Naive thymus-derived CD8-positive, alpha-beta T cell (primary cell): ENCODE measurements at regions of chr3 and their contacts with region 1.

Region 1: GRCh38 chr3:71495708-71496472 is 87.6 kb downstream of the FOXP1 start:
- DNase-seq: peak in 2 of 10 donors; percentile 23 to 41
- ATAC-seq: peak in 1 of 2 donors; percentile 19
- H3K4me3 Mint-ChIP-seq: peak overlapping the region; percentile 58 to 87 (median 82)
- H3K27ac Mint-ChIP-seq: peak overlapping the region; percentile 96 to 100 (median 98)
- H3K4me1 Mint-ChIP-seq: peaks cover 46 to 94% (median 88%) of the 10 kb centered on the region in 4 donors
- H3K27me3 Mint-ChIP-seq: no peaks in the 10 kb centered on the region

Region 2: DNA sequence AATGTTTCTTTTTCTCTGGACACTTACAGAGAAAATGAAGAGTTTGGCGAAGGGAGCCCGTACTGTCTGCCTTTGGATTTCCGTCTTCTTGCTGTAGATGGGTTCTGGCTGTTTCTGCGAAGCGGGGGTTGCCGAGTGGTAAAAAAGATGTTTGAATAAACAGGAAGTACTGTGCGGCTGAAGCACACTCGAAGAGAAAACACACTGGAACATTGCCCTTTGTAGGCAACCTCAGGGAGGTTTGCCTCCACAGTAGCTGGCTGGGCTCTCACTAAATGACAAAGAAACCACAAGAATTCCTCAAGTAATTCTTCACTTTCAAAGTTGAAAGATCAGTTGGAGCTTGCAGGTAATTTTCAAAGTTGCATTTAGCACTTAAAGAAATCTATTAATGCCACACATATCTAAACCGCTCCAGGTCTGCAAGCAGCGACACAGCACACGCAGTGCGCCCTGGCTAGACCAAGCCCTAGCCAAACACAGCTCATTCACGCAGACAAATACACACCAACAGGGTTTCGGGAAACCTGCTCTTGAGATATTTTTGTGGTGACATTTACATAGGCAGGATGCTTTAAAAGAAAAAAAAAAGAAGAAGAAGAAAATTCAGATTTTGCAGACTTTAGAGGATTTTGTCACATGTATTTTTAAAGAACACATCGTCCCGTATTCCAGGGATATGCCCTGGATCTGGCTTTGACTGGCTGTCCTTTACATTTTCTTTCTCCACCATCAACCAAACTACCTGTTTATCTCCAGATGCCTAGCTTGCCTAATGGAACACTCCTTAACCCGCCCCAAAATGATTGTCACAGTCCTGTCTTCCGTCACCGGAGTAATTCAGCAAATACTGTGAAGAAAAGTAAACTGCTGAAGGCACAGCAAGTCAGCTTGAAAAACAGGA is 365.2 kb before region 1 on chr3:
- POLR2A ChIA-PET with region 1: interaction called, 12 read pairs
- DNase-seq: peak; percentile 46 to 90 (median 76)
- ATAC-seq: peak; percentile 77 to 83
- H3K4me3 Mint-ChIP-seq: peak overlapping the region; percentile 86 to 99 (median 93)
- H3K27ac Mint-ChIP-seq: peak overlapping the region; percentile 92 to 98 (median 96)
- H3K4me1 Mint-ChIP-seq: peaks cover 44 to 89% (median 84%) of the 10 kb centered on the region in 4 donors
- H3K27me3 Mint-ChIP-seq: no peaks in the 10 kb centered on the region

Region 3: DNA sequence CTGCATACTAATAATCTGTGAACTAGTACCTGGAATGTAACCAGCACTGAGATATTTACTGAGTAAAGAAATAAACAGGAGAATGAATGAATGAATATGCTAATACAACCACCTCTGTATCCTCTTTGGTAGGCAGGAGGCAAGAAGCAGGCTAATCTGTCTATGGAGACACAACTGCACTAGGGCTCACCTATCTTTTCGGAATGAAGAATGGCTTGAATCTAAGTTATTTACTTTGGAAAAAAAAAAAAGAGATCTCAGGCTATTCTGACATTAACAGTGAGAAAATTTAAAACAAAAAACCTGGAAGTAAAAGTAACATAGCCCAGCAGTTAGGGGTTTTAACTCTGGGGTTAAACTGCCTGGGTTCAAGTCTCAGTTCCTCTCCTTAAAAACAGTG is 86.5 kb before region 1 on chr3:
- POLR2A ChIA-PET with region 1: no interaction called
- DNase-seq: no peak
- ATAC-seq: no peak
- H3K4me3 Mint-ChIP-seq: peak overlapping the region in 3 of 10 donors; percentile 30 to 59 (median 39)
- H3K27ac Mint-ChIP-seq: peak overlapping the region; percentile 47 to 96 (median 81)
- H3K4me1 Mint-ChIP-seq: peaks cover 40 to 92% (median 87%) of the 10 kb centered on the region in 4 donors
- H3K27me3 Mint-ChIP-seq: no peaks in the 10 kb centered on the region

Region 4: DNA sequence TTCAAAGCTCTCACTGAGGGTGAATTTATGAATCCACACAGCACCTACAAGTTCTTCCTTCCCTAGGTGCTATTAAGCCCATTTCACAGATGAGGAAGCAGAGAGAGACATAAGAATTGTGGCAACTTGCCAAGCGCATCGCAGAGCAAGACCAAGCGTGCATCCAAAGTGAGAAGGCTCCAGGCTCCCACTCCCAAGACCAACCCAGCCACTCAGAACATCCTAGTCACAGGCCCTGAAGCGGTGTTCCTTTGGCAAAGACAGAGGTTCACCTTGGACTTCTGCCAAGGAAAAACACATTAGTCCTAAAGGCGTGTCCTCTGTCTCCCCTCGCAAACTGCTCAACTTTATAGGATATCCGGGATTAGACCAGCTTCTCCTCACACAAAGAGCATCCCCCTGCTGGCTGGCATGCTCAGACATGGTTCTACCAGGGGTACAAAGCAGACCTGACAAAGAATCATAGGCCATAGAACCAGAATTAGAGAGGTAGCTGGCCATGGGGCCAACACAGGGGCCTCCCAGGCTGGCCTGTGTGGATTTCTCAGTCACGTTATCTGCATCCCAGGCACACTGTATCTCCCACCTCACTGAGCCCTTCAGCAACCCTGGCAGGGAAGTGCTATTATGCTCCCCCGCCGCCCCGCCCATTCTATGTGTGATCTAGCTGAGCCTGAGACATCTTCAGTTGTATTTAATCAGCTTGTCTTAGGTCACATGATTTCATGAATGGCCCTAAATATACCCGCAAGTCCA is 72.6 kb before region 1 on chr3:
- POLR2A ChIA-PET with region 1: interaction called, 15 read pairs
- DNase-seq: no peak
- ATAC-seq: no peak
- H3K4me3 Mint-ChIP-seq: peak overlapping the region; percentile 62 to 81 (median 74)
- H3K27ac Mint-ChIP-seq: peak overlapping the region; percentile 93 to 99 (median 98)
- H3K4me1 Mint-ChIP-seq: peaks cover 52 to 95% (median 88%) of the 10 kb centered on the region in 4 donors
- H3K27me3 Mint-ChIP-seq: no peaks in the 10 kb centered on the region

Region 5: DNA sequence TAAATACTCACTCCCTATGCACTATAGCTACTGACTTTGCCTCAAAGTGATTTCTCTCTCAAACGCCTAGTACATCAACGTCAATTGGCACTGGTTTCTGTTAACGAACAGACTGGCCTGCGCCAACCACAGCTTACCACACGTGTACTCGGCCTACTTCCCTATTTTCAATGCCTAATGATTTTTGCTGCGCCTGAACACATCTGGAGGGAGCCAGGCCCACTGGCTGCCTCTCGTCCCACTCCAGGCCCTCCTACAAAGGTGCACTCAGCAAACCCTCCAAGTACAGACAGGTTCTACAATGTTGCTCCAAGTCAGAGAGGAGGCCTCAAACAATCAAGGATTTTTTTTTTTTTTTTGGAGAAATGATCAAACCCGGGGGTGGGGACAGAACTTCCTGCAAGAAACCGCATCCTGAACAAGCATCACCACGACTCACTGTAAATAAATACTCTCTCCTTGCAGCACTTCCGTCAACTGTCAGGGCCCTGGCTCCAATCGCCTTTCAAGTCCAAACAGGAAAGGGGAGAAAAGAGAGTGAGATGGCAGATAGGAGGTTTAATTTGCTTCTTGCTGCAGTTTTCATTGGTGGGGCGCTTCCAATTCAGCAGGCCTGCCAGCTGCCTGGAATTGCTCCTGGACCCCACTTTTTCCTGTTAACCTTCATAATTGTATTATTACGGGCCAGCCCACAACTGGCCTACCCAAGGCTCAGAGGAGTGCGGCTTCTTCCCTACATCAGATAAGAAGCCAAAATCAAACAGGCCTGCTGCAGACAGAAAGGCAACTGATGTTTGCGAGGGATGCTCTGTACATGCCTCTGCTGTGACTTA is 51.6 kb before region 1 on chr3:
- POLR2A ChIA-PET with region 1: interaction called, 61 read pairs
- DNase-seq: peak; percentile 44 to 96 (median 84)
- ATAC-seq: peak; percentile 69 to 84
- H3K4me3 Mint-ChIP-seq: peak overlapping the region; percentile 59 to 87 (median 84)
- H3K27ac Mint-ChIP-seq: peak overlapping the region; percentile 95 to 100 (median 99)
- H3K4me1 Mint-ChIP-seq: peaks cover 48 to 97% (median 97%) of the 10 kb centered on the region in 4 donors
- H3K27me3 Mint-ChIP-seq: no peaks in the 10 kb centered on the region

Region 6: GRCh38 chr3:71451060-71451459 is 44.8 kb before region 1 on chr3:
- POLR2A ChIA-PET with region 1: interaction called, 126 read pairs
- DNase-seq: peak in 5 of 10 donors; percentile 32 to 69 (median 47)
- ATAC-seq: peak; percentile 39 to 65
- H3K4me3 Mint-ChIP-seq: peak overlapping the region; percentile 47 to 86 (median 76)
- H3K27ac Mint-ChIP-seq: peak overlapping the region; percentile 89 to 99 (median 98)
- H3K4me1 Mint-ChIP-seq: peaks cover 61 to 100% (median 98%) of the 10 kb centered on the region in 4 donors
- H3K27me3 Mint-ChIP-seq: no peaks in the 10 kb centered on the region

Region 7: DNA sequence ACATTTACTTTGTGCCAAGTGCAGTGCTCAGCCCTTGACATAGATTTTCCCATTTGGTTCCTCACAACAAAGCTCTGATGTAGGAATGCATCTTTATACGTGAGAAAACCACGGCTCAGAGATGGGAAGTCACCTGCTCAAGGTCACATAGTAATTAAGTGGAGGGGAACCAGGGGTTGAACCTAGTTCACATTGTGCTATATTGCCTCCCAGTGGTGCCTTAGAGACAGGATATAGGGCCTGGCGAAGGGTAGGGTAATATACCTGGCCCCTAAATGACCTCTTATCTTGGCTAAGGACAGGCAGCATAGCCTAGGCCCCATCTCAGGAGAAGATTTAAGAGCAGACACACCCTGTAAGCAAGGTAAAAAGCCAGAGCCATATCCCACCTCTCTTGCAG is 16.1 kb after region 1 on chr3:
- POLR2A ChIA-PET with region 1: interaction called, 40 read pairs
- DNase-seq: peak in 9 of 10 donors; percentile 30 to 76 (median 58)
- ATAC-seq: peak; percentile 98 to 100
- H3K4me3 Mint-ChIP-seq: peak overlapping the region in 7 of 10 donors; percentile 2 to 42 (median 16)
- H3K27ac Mint-ChIP-seq: peak overlapping the region in 9 of 10 donors; percentile 75 to 93 (median 84)
- H3K4me1 Mint-ChIP-seq: peaks cover 14 to 28% (median 26%) of the 10 kb centered on the region in 4 donors
- H3K27me3 Mint-ChIP-seq: no peaks in the 10 kb centered on the region